A673 (cell line): ENCODE measurements at regions of chr10 and their contacts with region 1.

Region 1: GRCh38 chr10:26675873-26676257 is 21.6 kb upstream of the PDSS1 start:
- DNase-seq: peak; percentile 90
- H3K4me3 ChIP-seq: peak overlapping the region; percentile 57
- H3K27ac ChIP-seq: peak overlapping the region; percentile 99
- H3K4me1 ChIP-seq: peaks cover 5% of the 10 kb centered on the region
- H3K27me3 ChIP-seq: no peaks in the 10 kb centered on the region
- CTCF ChIP-seq: no peak

Region 2: GRCh38 chr10:25743832-25744231 is 932.0 kb before region 1 on chr10:
- CTCF ChIA-PET with region 1: no interaction called
- POLR2A ChIA-PET with region 1: no interaction called
- intact Hi-C with region 1: loop called (anchors 5 kb)
- DNase-seq: peak; percentile 83
- H3K4me3 ChIP-seq: peak overlapping the region; percentile 7
- H3K27ac ChIP-seq: peak overlapping the region; percentile 88
- H3K4me1 ChIP-seq: peaks cover 36% of the 10 kb centered on the region
- H3K27me3 ChIP-seq: no peaks in the 10 kb centered on the region
- CTCF ChIP-seq: no peak

Region 3: DNA sequence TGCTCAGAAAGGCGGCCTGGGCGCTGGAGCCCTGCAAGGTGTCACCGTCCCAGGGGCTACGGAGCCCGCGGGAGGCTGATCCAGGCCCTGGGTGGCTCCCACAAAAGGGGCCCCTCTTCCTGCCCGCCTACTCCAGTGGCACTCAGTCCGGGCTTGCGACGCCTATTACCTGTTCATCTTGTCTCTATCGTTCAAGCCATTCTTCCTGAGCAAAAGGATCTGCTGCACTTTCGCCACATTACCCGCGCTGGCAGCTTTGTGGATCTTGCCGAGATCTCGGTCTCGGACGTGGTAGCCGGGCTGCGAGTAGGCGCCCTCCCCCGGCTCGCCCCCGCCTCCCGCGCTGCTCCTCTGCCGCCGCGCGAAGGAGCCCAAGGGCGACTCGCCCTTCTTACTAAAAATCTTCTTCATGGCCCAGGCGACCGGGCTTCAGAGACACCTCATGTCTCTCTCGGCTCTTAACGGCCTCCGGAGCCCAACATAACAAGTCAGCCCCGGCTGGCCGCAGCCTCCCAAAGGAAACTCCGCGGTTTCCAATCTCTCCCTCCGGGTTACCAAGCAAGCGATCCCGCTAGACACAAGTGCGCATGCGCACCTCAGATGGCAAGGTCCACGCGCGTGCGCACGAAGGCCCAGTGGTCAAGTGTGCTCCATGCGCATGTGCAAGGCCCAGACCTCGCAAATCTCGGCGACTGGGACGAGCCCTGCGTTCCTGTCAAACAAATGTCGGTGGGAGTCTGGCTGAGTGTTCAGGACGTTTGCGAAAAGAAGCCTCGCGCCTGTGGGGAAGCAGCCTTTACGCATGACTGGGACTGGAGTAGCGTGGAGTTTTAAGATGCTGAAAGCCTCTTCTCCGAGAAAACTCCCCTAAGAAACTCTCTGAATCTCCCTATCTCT is 424.3 kb after region 1 on chr10 and contains the start of gene ANKRD26:
- CTCF ChIA-PET with region 1: no interaction called
- POLR2A ChIA-PET with region 1: interaction called, 11 read pairs
- intact Hi-C with region 1: no loop called
- DNase-seq: peak; percentile 99
- H3K4me3 ChIP-seq: peak within 1 kb of the TSS; percentile 77
- H3K27ac ChIP-seq: peak within 1 kb of the TSS; percentile 92
- H3K4me1 ChIP-seq: no peaks in the 10 kb centered on the region
- H3K27me3 ChIP-seq: no peaks in the 10 kb centered on the region
- CTCF ChIP-seq: no peak
- total RNA-seq, gene ANKRD26: 15.2 and 16.9 TPM in 2 replicates